ENCODE measurements at regions of chr6 and their contacts with region 1.

Region 1: GRCh38 chr6:29847871-29848630 is 20.4 kb downstream of the HLA-G start:
- DNase-seq: peak; percentile 56 to 88
- ATAC-seq: peak; percentile 75

Region 2: GRCh38 chr6:29992807-29993206 is 144.8 kb after region 1 on chr6:
- intact Hi-C with region 1: no loop called
- DNase-seq: no peak
- ATAC-seq: no peak

Region 3: GRCh38 chr6:30006170-30007131 is 158.4 kb after region 1 on chr6:
- intact Hi-C with region 1: loop called in 1 of 2 experiments (anchors 10 kb)
- DNase-seq: peak; percentile 42 to 49
- ATAC-seq: peak; percentile 68

Region 4: DNA sequence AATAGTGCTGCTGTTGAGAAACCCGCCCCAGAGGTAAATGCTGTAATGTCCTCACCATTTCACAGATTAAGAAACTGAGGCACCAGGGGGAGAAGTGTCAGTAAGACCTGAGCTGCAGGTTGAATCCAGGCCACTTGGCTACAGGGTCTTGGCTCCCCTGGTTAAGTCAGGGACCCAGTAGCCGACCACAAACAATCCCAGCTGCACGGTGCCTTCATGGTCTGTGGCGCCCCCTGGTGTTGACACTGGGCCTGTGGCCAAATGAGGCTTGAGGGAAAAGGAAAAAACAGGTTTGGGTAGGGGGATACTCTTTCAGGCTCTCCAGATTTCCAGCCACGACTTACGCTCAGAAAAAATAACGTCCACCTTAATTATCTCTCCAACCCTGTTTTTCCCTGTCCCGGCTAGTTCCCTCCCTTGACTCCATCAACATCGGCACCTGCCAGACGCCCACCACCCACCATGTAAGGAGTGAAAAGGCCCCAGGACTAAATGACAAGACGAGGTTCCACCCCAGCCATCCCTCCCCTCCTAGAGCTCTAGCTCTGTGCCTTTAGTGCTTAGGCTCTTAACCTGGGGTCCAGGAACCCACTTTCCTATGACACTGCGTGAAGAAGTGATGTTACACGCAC is 165.4 kb after region 1 on chr6:
- intact Hi-C with region 1: loop called (anchors 2 to 10 kb)
- DNase-seq: peak in 1 of 2 donors; percentile 70
- ATAC-seq: peak; percentile 75

Region 5: DNA sequence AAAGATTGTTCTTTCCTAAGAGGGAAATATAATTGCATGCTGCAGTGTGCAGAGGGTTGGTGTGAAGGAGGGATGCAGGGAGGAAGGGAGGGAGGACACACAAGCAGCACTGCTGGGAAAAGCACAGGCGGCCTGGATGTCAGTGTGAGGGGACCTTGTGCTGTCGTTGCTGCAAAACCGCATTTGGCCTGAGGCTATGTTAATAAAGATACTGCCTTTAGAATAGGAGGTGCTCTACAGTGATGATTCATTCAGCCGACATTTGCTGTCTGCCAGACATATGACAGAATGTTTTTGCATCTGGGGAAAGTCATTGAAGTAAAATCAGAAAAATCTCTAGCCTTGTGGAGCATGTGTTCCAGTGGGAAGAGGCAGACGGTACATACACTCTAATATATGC is 415.7 kb after region 1 on chr6:
- intact Hi-C with region 1: no loop called
- DNase-seq: no peak
- ATAC-seq: no peak

Measured in left colon (tissue), 2 donors.